Right cardiac atrium (tissue), 5 donors: ENCODE measurements at regions of chr2 and their contacts with region 1.

Region 1: DNA sequence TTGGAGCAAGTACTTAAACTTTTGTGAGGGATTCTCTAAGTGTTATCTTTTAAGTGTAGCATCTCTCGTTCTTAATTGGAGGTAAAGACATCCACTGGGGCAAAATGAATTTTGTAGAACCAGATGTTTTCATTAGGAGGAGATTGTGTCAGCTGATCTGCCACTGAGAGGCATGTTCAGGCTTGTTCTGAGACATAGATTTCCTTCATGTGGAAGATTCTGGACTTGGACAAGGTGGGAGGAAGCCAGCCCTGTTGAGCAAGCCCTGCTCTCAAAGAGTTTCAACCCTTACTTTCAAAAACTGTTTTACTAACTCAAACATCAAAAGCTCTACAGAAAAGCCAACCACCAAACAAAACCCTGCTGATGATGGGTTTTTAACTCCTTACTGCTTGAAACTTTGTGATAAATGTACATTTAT is 6.5 kb downstream of the MAP4K4 start:
- DNase-seq: peak in 2 of 3 donors; percentile 48 to 73
- ATAC-seq: peak; percentile 56 to 77
- H3K4me3 ChIP-seq: no peak overlapping the region
- H3K27ac ChIP-seq: no peak overlapping the region
- H3K4me1 ChIP-seq: peaks cover 11% of the 10 kb centered on the region
- H3K27me3 ChIP-seq: no peaks in the 10 kb centered on the region

Region 2: DNA sequence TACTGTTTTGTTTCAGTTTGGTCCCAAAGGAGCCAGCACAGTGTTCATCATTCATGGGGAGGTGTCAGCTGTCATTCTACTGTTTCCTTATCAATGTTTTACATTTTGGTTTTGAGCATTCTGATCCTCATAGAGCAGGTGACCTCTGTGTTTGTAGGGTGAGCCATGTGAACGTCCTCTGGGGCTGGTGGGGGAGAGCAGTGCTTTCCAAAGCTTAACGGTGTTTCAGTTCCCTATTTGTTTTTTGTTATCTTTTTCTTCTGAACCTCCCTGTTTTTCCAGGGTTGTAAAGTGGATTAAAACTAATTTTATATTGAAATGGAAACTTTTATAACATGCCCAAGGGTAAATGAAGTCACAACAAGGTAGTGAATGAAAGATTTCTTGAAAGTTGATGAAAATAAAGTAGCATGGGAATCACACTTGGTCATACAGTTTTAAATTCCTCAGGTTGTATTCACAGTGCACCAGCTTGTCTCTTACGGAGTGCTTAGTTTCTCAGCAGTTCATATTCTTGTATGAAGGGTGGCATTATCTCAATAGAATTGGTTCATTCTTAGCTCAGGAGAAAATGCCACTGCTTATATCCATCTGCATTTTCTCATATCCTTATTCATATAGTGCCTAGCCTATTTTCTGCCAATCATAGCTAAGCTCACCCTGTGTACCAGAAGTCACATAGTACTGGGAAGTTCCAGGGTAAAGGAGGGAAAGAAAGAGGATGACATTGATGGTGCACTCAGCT is 48.0 kb after region 1 on chr2:
- intact Hi-C with region 1: loop called in 1 of 4 experiments (anchors 10 kb)
- DNase-seq: no peak
- ATAC-seq: peak; percentile 45
- H3K4me3 ChIP-seq: no peak overlapping the region
- H3K27ac ChIP-seq: no peak overlapping the region
- H3K4me1 ChIP-seq: peaks cover 15% of the 10 kb centered on the region
- H3K27me3 ChIP-seq: no peaks in the 10 kb centered on the region